AG04449 (cell line): ENCODE measurements at regions of chr22 and their contacts with region 1.

Region 1: GRCh38 chr22:46845296-46846149 is 83.1 kb downstream of the TBC1D22A start:
- DNase-seq: no peak
- H3K4me3 ChIP-seq: peak overlapping the region; percentile 19
- CTCF ChIP-seq: peak; percentile 11

Region 2: GRCh38 chr22:46815896-46816731 is 29.4 kb before region 1 on chr22:
- CTCF ChIA-PET with region 1: interaction called, 11 read pairs
- POLR2A ChIA-PET with region 1: no interaction called
- DNase-seq: no peak
- H3K4me3 ChIP-seq: no peak overlapping the region
- CTCF ChIP-seq: no peak

Region 3: DNA sequence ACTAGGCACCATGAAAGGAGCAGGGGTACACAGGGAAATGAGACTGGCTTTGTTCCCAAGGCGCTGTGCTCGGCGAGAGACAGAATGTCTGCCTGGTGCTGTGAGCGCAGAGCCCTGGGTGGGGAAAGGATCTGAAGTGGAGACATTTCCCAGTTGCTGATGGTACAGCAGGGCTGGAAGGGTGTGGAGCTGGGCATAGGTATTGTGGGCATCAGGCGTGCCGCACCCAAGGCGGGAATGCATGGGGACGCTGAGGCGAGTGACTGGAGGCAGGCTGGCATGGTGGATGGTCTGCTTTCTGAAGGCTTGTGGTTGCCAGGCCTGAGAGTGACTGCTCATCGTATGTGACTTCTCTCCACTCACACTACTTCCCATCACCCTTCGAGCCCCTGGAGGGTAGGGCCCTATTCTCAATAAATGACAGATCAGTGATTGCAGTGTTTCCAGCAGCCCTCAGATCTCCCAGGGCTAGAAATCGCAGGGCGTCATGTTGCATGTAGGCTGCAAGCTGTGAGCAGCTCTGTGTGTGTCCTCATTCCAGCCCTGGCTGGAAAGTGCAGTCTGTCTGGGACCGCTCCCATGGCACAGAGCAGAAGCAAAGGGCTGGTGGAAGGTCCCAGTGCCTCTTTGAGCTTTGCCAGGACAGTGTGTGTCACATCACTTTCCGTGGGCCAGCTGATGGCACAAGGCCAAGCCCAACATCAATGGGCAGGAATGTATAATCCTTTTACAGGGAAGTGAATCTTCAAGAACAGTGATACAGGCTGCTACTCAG is 15.4 kb before region 1 on chr22:
- CTCF ChIA-PET with region 1: interaction called, 44 read pairs
- POLR2A ChIA-PET with region 1: interaction called, 4 read pairs
- DNase-seq: no peak
- H3K4me3 ChIP-seq: peak overlapping the region; percentile 16; the same call in 1 of the 2 replicates
- CTCF ChIP-seq: no peak

Region 4: DNA sequence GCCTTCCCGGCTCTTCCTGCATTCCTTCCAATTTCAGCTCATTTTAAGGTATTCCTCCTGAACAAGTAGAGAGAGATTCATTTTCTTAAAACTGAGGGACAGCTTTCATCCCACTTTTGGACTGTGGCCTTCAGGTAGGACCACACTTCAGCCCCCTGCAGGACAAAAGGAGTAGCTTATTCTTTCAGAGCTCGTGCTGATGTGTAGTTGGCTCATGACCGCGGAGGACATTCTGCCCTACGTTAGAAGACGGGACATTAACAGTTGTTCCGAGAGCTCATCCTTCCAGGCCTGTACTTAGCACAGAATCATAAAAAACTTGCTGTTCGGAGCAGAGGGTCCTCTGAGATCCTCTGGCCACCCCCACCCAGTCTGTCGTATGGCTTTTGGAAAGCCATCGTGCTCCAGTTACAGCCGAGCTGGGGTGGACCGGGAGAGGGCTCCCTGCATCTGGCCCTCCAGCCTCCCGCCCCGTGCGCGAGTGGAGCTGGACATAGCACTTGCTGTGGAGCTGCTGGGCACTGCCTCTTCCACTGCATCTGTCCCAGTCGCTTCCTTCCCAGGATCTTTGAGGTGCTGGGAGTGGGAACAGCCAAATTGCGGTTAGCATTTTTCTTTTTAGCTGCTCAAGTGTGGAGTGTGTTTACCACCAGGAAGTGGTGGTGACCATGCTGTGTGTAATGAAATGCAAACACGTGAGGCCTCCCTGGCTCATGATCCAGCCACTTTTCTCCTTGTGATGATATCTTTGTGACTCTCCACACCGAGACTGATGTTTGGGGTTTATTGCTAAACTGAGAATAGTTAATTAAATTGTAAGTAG is 167.3 kb after region 1 on chr22:
- CTCF ChIA-PET with region 1: interaction called, 10 read pairs
- POLR2A ChIA-PET with region 1: no interaction called
- DNase-seq: peak; percentile 37
- H3K4me3 ChIP-seq: no peak overlapping the region
- CTCF ChIP-seq: no peak

Region 5: GRCh38 chr22:47043835-47044721 is 198.6 kb after region 1 on chr22:
- CTCF ChIA-PET with region 1: no interaction called
- POLR2A ChIA-PET with region 1: no interaction called
- DNase-seq: no peak
- H3K4me3 ChIP-seq: no peak overlapping the region
- CTCF ChIP-seq: no peak

Region 6: GRCh38 chr22:48492366-48493320 is 1647.1 kb after region 1 on chr22:
- CTCF ChIA-PET with region 1: interaction called, 43 read pairs
- POLR2A ChIA-PET with region 1: no interaction called
- DNase-seq: peak; percentile 23
- H3K4me3 ChIP-seq: no peak overlapping the region
- CTCF ChIP-seq: peak; percentile 88